IMR-90 (cell line): ENCODE measurements at regions of chr5 and their contacts with region 1.

Region 1: DNA sequence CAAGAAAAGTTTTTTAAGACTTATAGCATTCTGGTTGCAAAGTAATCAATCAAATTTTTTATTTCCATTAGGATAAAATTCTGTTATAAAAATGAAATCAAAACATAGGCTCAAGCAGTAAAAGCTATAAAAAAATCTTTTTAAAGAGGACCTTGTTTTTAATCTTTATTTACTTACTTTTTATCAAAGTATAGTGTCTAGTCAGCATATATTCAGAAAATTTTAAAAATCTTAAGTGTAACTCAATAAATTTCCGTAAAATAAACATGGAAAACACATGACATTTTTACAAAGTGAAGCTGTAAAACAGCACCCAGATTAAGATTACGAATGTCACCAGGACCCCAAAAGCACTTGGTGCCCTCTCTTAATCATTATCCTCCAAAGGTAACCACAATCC is 302.4 kb downstream of the TMEM161B start:
- DNase-seq: no peak
- ATAC-seq: no peak
- H3K4me3 ChIP-seq: no peak overlapping the region
- H3K27ac ChIP-seq: no peak overlapping the region
- H3K4me1 ChIP-seq: no peaks in the 10 kb centered on the region
- H3K27me3 ChIP-seq: no peaks in the 10 kb centered on the region
- CTCF ChIP-seq: no peak
- POLR2A ChIP-seq: no peak
- RAD21 ChIP-seq: no peak

Region 2: DNA sequence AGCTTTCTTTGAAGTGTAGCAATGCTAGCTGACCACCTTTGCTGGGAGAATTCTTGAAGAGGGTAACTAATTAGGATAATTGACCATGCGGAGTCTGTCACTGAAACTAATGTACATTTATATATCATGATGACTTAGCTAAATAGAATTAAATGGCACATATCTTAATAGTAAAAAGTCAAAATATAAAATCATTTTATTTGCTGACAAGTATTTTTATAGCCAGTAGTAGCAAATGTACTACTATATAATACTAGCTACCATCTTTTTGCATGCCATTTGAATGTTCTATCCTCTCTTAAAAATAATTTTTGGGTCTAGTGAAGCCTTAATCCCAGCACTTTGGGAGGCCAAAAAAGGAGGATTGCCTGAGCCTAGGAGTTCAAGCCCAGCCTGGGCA is 1954.3 kb before region 1 on chr5:
- CTCF ChIA-PET with region 1: no interaction called
- POLR2A ChIA-PET with region 1: no interaction called
- dilution Hi-C with region 1: no loop called
- in situ Hi-C with region 1: no loop called
- intact Hi-C with region 1: loop called (anchors 5 kb)
- DNase-seq: no peak
- ATAC-seq: no peak
- H3K4me3 ChIP-seq: no peak overlapping the region
- H3K27ac ChIP-seq: no peak overlapping the region
- H3K4me1 ChIP-seq: no peaks in the 10 kb centered on the region
- H3K27me3 ChIP-seq: no peaks in the 10 kb centered on the region
- CTCF ChIP-seq: no peak
- POLR2A ChIP-seq: no peak
- RAD21 ChIP-seq: no peak